ENCODE measurements at regions of chr22 and their contacts with region 1.

Region 1: GRCh38 chr22:50507991-50508884 is at the start of gene NCAPH2:
- DNase-seq: peak; percentile 95 to 98 (median 97)
- H3K4me3 ChIP-seq: peak within 1 kb of the TSS; percentile 81
- H3K27ac ChIP-seq: peak within 1 kb of the TSS; percentile 61 to 94
- H3K4me1 ChIP-seq: peaks cover 13% of the 10 kb centered on the region
- H3K27me3 ChIP-seq: no peaks in the 10 kb centered on the region
- CTCF ChIP-seq: peak in 2 of 3 donors; percentile 19 to 40
- EP300 ChIP-seq: no peak
- POLR2A ChIP-seq: peak; percentile 94
- total RNA-seq, gene NCAPH2: 37.1 to 61.5 (median 53.7) TPM

Region 2: GRCh38 chr22:50244420-50245213 is 263.6 kb before region 1 on chr22 and contains the start of gene TUBGCP6:
- intact Hi-C with region 1: loop called in 1 of 4 experiments (anchors 10 kb)
- DNase-seq: peak; percentile 92 to 97 (median 95)
- H3K4me3 ChIP-seq: peak within 1 kb of the TSS; percentile 71
- H3K27ac ChIP-seq: peak within 1 kb of the TSS; percentile 50 to 82
- H3K4me1 ChIP-seq: peaks cover 10% of the 10 kb centered on the region
- H3K27me3 ChIP-seq: no peaks in the 10 kb centered on the region
- CTCF ChIP-seq: peak in 1 of 3 donors; percentile 66
- EP300 ChIP-seq: no peak
- POLR2A ChIP-seq: peak; percentile 91
- total RNA-seq, gene TUBGCP6: 35.9 to 52.2 (median 40.8) TPM

Region 3: DNA sequence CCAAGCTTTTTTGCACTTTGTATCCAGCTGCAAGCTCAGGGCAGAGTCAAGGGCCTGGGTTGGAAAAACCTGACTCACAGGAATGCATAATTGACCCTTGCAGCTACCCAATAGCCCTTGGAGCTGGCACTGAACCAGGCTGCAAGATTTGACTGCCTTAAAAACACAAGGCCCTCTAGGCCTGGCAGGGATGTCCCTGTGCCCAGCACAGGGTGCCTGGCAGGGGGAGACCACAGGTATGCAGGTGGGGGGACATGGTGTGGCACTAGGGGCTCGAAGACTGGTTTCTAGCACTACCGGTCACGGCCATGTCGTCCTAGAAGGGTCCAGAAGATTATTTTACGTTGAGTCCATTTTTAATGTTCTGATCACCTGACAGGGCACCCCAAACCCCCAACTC is 63.6 kb before region 1 on chr22:
- intact Hi-C with region 1: no loop called
- DNase-seq: peak; percentile 60 to 71 (median 70)
- H3K4me3 ChIP-seq: no peak overlapping the region
- H3K27ac ChIP-seq: no peak overlapping the region
- H3K4me1 ChIP-seq: peaks cover 9% of the 10 kb centered on the region
- H3K27me3 ChIP-seq: no peaks in the 10 kb centered on the region
- CTCF ChIP-seq: no peak
- EP300 ChIP-seq: no peak
- POLR2A ChIP-seq: no peak

Region 4: GRCh38 chr22:50641696-50642607 is 133.7 kb after region 1 on chr22:
- intact Hi-C with region 1: no loop called
- DNase-seq: peak; percentile 28 to 70 (median 45)
- H3K4me3 ChIP-seq: no peak overlapping the region
- H3K27ac ChIP-seq: no peak overlapping the region
- H3K4me1 ChIP-seq: peaks cover 8% of the 10 kb centered on the region
- H3K27me3 ChIP-seq: no peaks in the 10 kb centered on the region
- CTCF ChIP-seq: no peak
- EP300 ChIP-seq: no peak
- POLR2A ChIP-seq: no peak

Measured in ovary (tissue), 10 donors.